HCT116 (cell line): ENCODE measurements at regions of chr5 and their contacts with region 1.

Region 1: GRCh38 chr5:123610665-123611405 is 98.9 kb downstream of the CSNK1G3 start:
- DNase-seq: peak; percentile 54
- ATAC-seq: peak; percentile 75
- H3K4me3 ChIP-seq: no peak overlapping the region
- H3K27ac ChIP-seq: no peak overlapping the region
- H3K4me1 ChIP-seq: no peaks in the 10 kb centered on the region
- H3K27me3 ChIP-seq: no peaks in the 10 kb centered on the region
- CTCF ChIP-seq: peak; percentile 66 to 99 (median 84); a peak in 5 of 6 replicates
- POLR2A ChIP-seq: no peak
- RAD21 ChIP-seq: peak; percentile 86

Region 2: DNA sequence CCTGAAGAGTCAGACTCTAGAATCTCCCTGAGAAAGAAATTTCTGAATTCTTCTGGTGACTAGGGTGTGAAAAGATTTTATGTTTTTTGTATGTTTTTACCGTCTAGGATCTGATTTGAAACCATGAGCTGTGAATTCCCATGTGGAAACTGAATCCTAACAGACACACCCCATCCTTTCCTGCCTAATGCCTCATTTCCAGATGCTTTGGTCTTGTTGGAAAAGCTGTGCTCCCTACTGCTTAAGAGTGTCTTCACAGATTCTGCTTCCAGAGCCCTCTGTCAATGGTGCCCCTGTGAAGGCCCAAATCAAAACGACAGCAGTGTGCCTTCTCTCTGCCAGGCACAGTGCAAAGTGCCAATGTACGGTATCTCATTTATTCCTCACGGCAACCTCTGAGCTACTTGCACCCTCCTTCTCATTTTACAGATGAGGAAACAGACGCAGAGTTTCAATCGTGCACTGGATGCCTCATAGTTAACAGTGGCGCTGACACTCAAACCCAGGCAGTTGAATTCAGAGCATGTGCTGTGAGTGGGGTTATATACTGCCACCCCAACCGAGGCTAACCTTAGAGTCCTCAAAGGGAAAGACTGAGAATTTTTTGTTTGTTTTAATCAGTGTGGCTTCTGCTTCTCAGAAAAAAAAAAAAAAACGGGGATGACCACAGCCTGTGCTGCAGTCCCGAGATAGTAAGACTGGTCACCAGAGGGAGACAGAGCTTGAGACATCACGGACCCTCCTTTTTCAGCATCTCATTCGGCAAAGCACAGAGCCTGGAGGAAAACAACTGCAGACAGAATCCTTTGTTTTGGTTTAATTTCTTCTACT is 1110.4 kb before region 1 on chr5:
- CTCF ChIA-PET with region 1: no interaction called
- POLR2A ChIA-PET with region 1: no interaction called
- RAD21 ChIA-PET with region 1: no interaction called
- intact Hi-C with region 1: loop called (anchors 5 kb)
- DNase-seq: peak; percentile 38
- ATAC-seq: peak; percentile 94
- H3K4me3 ChIP-seq: no peak overlapping the region
- H3K27ac ChIP-seq: no peak overlapping the region
- H3K4me1 ChIP-seq: no peaks in the 10 kb centered on the region
- H3K27me3 ChIP-seq: no peaks in the 10 kb centered on the region
- CTCF ChIP-seq: peak; percentile 37 to 66 (median 57); a peak in 5 of 6 replicates
- POLR2A ChIP-seq: no peak
- RAD21 ChIP-seq: peak; percentile 84

Region 3: GRCh38 chr5:122999945-123000563 is 610.8 kb before region 1 on chr5:
- CTCF ChIA-PET with region 1: no interaction called
- POLR2A ChIA-PET with region 1: no interaction called
- RAD21 ChIA-PET with region 1: no interaction called
- intact Hi-C with region 1: loop called (anchors 10 kb)
- DNase-seq: peak; percentile 36
- ATAC-seq: peak; percentile 87
- H3K4me3 ChIP-seq: no peak overlapping the region
- H3K27ac ChIP-seq: no peak overlapping the region
- H3K4me1 ChIP-seq: no peaks in the 10 kb centered on the region
- H3K27me3 ChIP-seq: no peaks in the 10 kb centered on the region
- CTCF ChIP-seq: peak; percentile 54 to 77 (median 73); a peak in 5 of 6 replicates
- POLR2A ChIP-seq: no peak
- RAD21 ChIP-seq: peak; percentile 78

Region 4: DNA sequence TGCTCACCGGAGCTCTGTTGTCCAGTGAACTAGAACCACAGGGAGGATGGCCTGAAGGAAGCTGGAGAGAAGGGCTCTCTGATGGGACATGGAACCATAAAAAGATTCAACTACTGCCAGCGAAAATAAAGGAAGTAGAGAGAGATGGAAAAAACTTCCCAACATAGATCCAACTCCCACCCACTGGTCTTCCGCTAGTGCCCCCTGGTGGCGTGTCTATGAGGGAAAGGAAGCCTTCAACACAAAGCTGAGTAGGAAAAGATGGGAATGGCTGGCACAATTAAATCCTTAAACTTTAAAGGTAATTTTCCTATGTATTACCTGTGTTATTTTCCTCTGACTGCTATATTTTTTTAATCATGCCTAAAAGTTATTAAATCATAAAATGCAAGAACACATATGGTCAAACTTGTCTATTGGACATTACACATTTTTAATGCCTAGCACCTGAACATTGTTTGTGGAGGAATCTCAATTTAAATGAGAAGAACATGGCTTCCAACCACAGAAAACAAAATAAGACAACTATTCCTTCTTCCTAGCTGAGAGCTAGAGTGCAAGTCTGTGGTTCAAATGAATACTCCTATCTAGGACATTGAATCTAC is 239.2 kb before region 1 on chr5:
- CTCF ChIA-PET with region 1: no interaction called
- POLR2A ChIA-PET with region 1: no interaction called
- RAD21 ChIA-PET with region 1: no interaction called
- intact Hi-C with region 1: loop called (anchors 5 kb)
- DNase-seq: no peak
- ATAC-seq: peak; percentile 70
- H3K4me3 ChIP-seq: no peak overlapping the region
- H3K27ac ChIP-seq: no peak overlapping the region
- H3K4me1 ChIP-seq: no peaks in the 10 kb centered on the region
- H3K27me3 ChIP-seq: no peaks in the 10 kb centered on the region
- CTCF ChIP-seq: peak in 2 of 3 experiments; percentile 55 to 67; a peak in 4 of 6 replicates
- POLR2A ChIP-seq: no peak
- RAD21 ChIP-seq: peak; percentile 31; the same call in 1 of the 2 replicates

Region 5: GRCh38 chr5:123423278-123424149 is 187.3 kb before region 1 on chr5 and contains the start of gene CEP120:
- CTCF ChIA-PET with region 1: interaction called, 24 read pairs
- POLR2A ChIA-PET with region 1: no interaction called
- RAD21 ChIA-PET with region 1: interaction called in 1 of 2 experiments, 6 read pairs
- intact Hi-C with region 1: loop called (anchors 1 kb)
- DNase-seq: peak; percentile 99
- ATAC-seq: peak; percentile 98
- H3K4me3 ChIP-seq: peak within 1 kb of the TSS; percentile 89 to 93
- H3K27ac ChIP-seq: peak within 1 kb of the TSS; percentile 53
- H3K4me1 ChIP-seq: peaks cover 4 to 16% of the 10 kb centered on the region in 2 experiments; a peak in 3 of 4 replicates
- H3K27me3 ChIP-seq: no peaks in the 10 kb centered on the region
- CTCF ChIP-seq: peak; percentile 60 to 76 (median 71)
- POLR2A ChIP-seq: peak; percentile 80
- RAD21 ChIP-seq: peak; percentile 69
- total RNA-seq, gene CEP120: 30.2 TPM